ENCODE measurements at regions of chr9 and their contacts with region 1.

Region 1: GRCh38 chr9:124771021-124771866 is at the start of gene NR6A1:
- DNase-seq: peak; percentile 94
- ATAC-seq: peak; percentile 90
- H3K4me3 Mint-ChIP-seq: peak within 1 kb of the TSS; percentile 90
- H3K27ac Mint-ChIP-seq: peak within 1 kb of the TSS; percentile 89
- H3K4me1 Mint-ChIP-seq: peaks cover 38% of the 10 kb centered on the region
- H3K27me3 Mint-ChIP-seq: peaks cover 40% of the 10 kb centered on the region
- CTCF ChIP-seq: no peak
- total RNA-seq, gene NR6A1: 2.3 and 3.1 TPM in 2 replicates

Region 2: GRCh38 chr9:124617471-124618141 is 153.6 kb before region 1 on chr9:
- CTCF ChIA-PET with region 1: no interaction called
- POLR2A ChIA-PET with region 1: no interaction called
- intact Hi-C with region 1: loop called (anchors 5 kb)
- DNase-seq: peak; percentile 47
- ATAC-seq: peak; percentile 75
- H3K4me3 Mint-ChIP-seq: no peak overlapping the region
- H3K27ac Mint-ChIP-seq: no peak overlapping the region
- H3K4me1 Mint-ChIP-seq: peaks cover 2% of the 10 kb centered on the region
- H3K27me3 Mint-ChIP-seq: no peaks in the 10 kb centered on the region
- CTCF ChIP-seq: peak; percentile 41

Region 3: DNA sequence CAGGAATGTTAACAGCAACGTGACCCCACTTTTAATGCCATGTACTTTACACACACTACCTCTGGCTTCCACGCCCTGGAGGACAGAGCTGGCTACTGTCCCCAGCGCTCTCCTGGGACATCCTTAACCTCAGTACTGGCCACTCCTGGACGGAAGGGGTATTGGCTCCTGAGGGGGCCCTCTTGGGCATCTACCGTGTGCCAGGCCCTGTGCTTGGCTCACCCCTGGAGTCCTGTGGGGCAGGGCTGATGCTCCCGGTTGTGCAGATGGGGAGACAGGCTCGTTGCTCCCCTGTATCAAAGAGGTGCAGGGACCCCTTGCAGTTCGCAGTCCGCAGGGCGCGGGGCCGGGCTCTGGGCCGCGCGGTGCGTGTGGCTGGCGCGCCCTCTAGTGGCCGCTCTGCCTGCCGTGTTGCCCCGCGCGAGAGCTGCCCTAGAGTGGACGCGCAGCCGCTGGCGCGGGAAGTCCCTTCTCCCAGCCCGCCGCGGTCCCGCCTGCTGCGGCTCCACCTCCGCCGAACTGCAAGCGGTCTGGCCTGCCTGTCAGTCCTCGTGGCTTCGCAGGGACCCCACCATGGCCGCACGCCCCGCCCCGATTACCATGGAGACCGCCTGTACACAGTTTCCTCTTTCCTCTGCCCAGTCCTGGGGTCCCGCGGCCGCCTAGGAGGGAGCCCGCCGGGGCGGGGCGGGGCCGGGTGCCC is 81.7 kb after region 1 on chr9 and contains the start of gene WDR38:
- CTCF ChIA-PET with region 1: interaction called, 216 read pairs
- POLR2A ChIA-PET with region 1: interaction called, 6 read pairs
- intact Hi-C with region 1: loop called (anchors 1 kb)
- DNase-seq: peak; percentile 81
- ATAC-seq: peak; percentile 82
- H3K4me3 Mint-ChIP-seq: peak within 1 kb of the TSS; percentile 81
- H3K27ac Mint-ChIP-seq: no peak within 1 kb of the TSS
- H3K4me1 Mint-ChIP-seq: peaks cover 15% of the 10 kb centered on the region
- H3K27me3 Mint-ChIP-seq: no peaks in the 10 kb centered on the region
- CTCF ChIP-seq: peak; percentile 92
- total RNA-seq, gene WDR38: not detected in 2 replicates

Region 4: GRCh38 chr9:124868511-124869465 is 97.5 kb after region 1 on chr9:
- CTCF ChIA-PET with region 1: interaction called, 6 read pairs
- POLR2A ChIA-PET with region 1: interaction called, 15 read pairs
- intact Hi-C with region 1: loop called (anchors 1 kb)
- DNase-seq: peak; percentile 97
- ATAC-seq: peak; percentile 69
- H3K4me3 Mint-ChIP-seq: peak overlapping the region; percentile 91
- H3K27ac Mint-ChIP-seq: peak overlapping the region; percentile 97
- H3K4me1 Mint-ChIP-seq: peaks cover 54% of the 10 kb centered on the region
- H3K27me3 Mint-ChIP-seq: no peaks in the 10 kb centered on the region
- CTCF ChIP-seq: no peak

Region 5: GRCh38 chr9:124940693-124941453 is 169.6 kb after region 1 on chr9 and contains the start of gene GOLGA1:
- CTCF ChIA-PET with region 1: no interaction called
- POLR2A ChIA-PET with region 1: no interaction called
- intact Hi-C with region 1: loop called (anchors 1 kb)
- DNase-seq: peak; percentile 92
- ATAC-seq: peak; percentile 87
- H3K4me3 Mint-ChIP-seq: peak within 1 kb of the TSS; percentile 96
- H3K27ac Mint-ChIP-seq: peak within 1 kb of the TSS; percentile 98
- H3K4me1 Mint-ChIP-seq: peaks cover 23% of the 10 kb centered on the region
- H3K27me3 Mint-ChIP-seq: no peaks in the 10 kb centered on the region
- CTCF ChIP-seq: no peak
- total RNA-seq, gene GOLGA1: 11.8 and 14.0 TPM in 2 replicates

Region 6: DNA sequence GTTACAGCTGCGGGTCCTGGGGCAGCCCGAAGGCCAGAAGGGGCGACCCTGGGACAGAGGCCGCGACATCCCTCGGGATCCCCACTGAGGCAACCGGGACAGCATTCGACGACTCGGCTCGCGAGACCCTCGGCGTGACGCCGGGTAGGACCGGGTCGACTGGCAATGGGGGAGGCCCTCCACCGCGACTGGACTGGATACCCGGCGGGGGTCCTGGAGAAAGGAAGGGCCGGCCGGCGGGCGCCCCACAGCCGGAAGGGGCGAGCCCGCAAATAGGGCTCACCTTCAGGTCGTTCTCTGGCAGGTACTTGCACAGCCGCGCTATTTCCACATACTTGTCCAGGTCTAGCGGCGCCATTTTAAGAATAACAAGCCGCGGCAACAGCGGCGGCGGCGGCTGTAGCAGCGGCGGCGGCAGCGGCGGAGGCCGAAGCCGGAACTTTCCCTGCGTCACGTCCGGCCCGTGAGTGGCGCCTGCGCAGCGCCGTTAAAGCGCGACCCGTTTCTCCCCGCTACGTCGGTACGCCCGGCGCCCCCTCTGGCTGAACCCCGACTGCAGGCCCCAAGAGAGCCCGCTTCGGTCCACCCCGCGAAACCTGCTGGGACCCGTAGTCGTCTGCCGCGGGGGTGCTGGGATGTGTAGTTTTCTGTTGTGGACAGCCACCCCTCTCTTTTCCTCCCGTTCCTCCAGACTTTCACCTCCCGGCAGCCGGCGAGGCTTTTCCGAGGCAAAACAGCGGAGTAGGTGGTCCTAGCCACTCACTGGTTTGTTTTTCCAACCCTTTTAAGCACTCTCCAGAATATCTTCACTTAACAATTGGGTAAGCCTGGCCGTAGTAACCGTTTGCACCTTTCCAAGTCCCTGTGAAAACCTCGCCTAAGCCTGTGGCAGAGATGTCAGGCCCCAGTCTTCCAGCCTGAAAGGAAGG is 418.4 kb after region 1 on chr9 and contains the start of gene PPP6C:
- CTCF ChIA-PET with region 1: no interaction called
- POLR2A ChIA-PET with region 1: no interaction called
- intact Hi-C with region 1: loop called (anchors 2 kb)
- DNase-seq: peak; percentile 93
- ATAC-seq: peak; percentile 98
- H3K4me3 Mint-ChIP-seq: peak within 1 kb of the TSS; percentile 97
- H3K27ac Mint-ChIP-seq: peak within 1 kb of the TSS; percentile 91
- H3K4me1 Mint-ChIP-seq: peaks cover 44% of the 10 kb centered on the region
- H3K27me3 Mint-ChIP-seq: no peaks in the 10 kb centered on the region
- CTCF ChIP-seq: no peak
- total RNA-seq, gene PPP6C: 41.2 and 47.0 TPM in 2 replicates

Region 7: DNA sequence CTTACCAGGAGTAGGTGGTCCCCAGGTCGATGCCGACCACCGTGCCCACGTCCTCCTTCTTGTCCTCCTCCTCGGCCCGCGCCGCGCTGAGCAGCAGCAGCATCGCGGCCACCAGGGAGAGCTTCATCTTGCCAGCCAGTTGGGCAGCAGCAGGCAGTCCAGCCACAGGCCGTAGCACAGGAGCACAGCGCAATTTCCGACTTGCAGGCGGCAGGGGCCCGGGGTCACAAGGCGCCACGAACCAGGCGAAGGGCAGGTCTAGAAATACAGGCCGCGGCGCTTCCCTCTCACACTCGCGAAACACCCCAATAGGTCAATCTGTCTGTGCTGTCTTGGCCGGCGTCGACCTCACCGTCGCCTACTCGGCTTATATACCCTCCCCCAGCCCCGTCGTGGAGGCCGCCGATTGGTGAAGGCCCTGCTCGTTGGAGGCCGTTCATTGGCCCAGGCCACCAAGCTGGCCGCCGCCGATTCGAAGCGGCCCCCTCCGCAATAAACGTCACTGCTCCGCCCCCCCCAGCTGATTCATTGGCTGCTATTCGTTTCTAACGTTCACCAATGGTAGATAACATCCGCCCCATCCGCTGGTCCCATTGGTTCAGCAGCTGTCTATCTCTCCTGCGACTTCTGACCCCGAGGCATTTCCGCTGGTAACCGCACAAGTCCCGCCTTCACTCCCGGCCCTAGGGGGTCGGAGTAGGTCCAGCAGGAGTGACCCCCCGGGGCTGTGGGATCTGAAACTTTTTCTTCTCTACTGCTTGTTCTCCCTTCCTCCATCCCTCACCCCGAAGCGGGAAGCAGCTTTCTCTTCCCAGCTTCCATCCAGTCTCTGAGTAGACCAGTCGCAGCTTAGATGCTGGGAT is 470.0 kb after region 1 on chr9 and contains the start of gene HSPA5:
- CTCF ChIA-PET with region 1: no interaction called
- POLR2A ChIA-PET with region 1: interaction called, 7 read pairs
- intact Hi-C with region 1: loop called (anchors 2 kb)
- DNase-seq: peak; percentile 94
- ATAC-seq: peak; percentile 88
- H3K4me3 Mint-ChIP-seq: peak within 1 kb of the TSS; percentile 94
- H3K27ac Mint-ChIP-seq: peak within 1 kb of the TSS; percentile 98
- H3K4me1 Mint-ChIP-seq: peaks cover 54% of the 10 kb centered on the region
- H3K27me3 Mint-ChIP-seq: no peaks in the 10 kb centered on the region
- CTCF ChIP-seq: no peak
- total RNA-seq, gene HSPA5: 118 and 119 TPM in 2 replicates

Region 8: DNA sequence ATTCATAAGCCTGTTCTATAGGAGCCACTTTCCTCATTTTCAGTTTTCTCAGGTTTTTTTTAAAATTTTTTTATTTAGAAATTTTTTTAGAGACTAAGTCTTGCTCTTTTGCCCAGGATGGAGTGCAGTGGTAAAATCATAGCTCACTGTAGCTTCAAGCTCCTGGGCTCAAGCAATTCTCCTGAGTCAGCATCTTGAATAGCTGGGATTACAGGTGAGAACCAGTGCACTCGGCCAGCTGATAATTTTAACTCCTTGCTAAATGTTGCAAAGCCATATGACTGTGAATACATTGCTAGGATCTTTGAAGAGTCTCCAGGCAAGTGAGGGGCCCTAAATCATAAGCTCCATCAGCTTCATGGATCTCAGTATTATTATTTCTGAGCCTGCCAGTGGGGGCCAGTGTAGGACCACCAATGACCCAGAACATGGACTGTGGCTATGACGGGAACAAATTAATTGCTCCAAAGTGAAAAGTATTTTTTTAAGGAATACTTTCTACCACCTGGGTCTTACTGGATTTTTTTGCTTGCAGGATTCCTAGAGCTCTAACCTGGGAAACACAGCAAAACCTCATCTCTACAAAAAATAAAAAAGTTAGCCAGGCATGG is 484.6 kb after region 1 on chr9:
- CTCF ChIA-PET with region 1: no interaction called
- POLR2A ChIA-PET with region 1: no interaction called
- intact Hi-C with region 1: no loop called
- DNase-seq: no peak
- ATAC-seq: no peak
- H3K4me3 Mint-ChIP-seq: no peak overlapping the region
- H3K27ac Mint-ChIP-seq: no peak overlapping the region
- H3K4me1 Mint-ChIP-seq: peaks cover 9% of the 10 kb centered on the region
- H3K27me3 Mint-ChIP-seq: peaks cover 2% of the 10 kb centered on the region
- CTCF ChIP-seq: no peak